WTC11 (cell line): ENCODE measurements at regions of chr15 and their contacts with region 1.

Region 1: GRCh38 chr15:68672781-68673205 is 94.0 kb downstream of the CORO2B start:
- DNase-seq: peak; percentile 49
- ATAC-seq: peak; percentile 71
- H3K4me3 Mint-ChIP-seq: no peak overlapping the region
- H3K27ac Mint-ChIP-seq: no peak overlapping the region
- H3K4me1 Mint-ChIP-seq: peaks cover 11% of the 10 kb centered on the region
- H3K27me3 Mint-ChIP-seq: no peaks in the 10 kb centered on the region
- CTCF ChIP-seq: no peak

Region 2: GRCh38 chr15:68537107-68537905 is 135.5 kb before region 1 on chr15:
- CTCF ChIA-PET with region 1: interaction called, 24 read pairs
- POLR2A ChIA-PET with region 1: no interaction called
- DNase-seq: no peak
- ATAC-seq: peak; percentile 73
- H3K4me3 Mint-ChIP-seq: no peak overlapping the region
- H3K27ac Mint-ChIP-seq: no peak overlapping the region
- H3K4me1 Mint-ChIP-seq: no peaks in the 10 kb centered on the region
- H3K27me3 Mint-ChIP-seq: peaks cover 6% of the 10 kb centered on the region
- CTCF ChIP-seq: no peak

Region 3: DNA sequence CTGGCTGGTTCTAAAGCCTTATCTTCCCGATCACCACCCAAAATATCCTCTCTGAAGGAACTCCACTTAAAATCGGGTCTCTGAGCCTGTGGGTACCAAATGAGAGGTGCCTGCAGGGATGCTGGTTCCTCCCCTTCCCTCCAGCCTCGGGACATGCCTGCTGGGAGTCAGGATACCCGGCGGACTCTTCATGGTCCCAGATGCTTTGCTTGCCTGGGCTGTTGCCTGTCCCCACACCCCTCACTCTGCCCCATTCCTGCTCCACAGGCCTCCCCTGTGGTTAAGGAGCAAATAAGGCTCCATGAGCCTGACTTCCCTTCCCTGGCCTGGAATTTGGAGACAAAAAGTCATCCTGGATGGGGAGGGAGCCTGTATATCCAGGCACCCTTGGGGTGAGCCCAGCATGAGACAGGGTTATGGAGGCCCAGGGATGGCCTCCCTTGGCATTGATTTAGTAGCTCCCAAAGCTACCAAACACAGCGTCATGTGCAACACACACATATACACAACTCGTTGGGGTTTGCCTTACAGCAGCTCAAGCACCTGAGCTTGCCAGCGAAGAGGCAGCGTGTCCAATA is 106.3 kb before region 1 on chr15:
- CTCF ChIA-PET with region 1: interaction called, 136 read pairs
- POLR2A ChIA-PET with region 1: interaction called, 3 read pairs
- DNase-seq: no peak
- ATAC-seq: peak; percentile 16; the same call in 1 of the 2 replicates
- H3K4me3 Mint-ChIP-seq: no peak overlapping the region
- H3K27ac Mint-ChIP-seq: no peak overlapping the region
- H3K4me1 Mint-ChIP-seq: peaks cover 40% of the 10 kb centered on the region
- H3K27me3 Mint-ChIP-seq: peaks cover 3% of the 10 kb centered on the region; the same call in 1 of the 2 replicates
- CTCF ChIP-seq: no peak

Region 4: DNA sequence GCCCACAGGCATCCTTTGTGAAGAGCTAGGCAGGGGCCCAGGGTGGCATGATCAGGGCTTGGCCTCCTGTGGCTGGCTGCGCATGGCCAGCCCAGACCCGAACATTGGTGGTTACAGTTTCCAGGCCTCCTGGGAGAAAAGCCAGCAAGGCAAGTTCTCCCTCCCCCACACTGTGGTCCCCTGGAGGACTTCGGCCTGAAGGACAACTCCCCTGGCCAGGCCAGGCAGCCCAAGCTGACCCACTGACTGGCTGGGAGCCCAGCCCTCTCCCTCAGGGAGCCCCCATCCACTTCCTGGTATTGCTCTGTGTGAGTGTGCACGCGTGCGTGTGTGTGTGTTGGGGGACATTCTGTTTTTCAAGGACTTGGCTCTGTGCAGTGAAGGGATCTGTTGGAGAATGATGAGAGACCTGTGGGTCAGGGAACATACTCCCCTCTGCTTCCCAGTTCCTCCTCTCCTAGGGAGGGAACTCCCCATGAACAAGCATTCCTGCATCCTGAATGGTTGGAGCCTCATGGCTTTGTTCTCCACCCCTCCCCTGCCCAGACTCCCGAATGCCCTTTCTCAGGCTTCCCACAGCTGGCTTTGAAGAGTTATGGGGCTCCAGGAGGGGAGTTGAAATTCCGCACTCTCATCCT is 64.5 kb before region 1 on chr15:
- CTCF ChIA-PET with region 1: interaction called, 22 read pairs
- POLR2A ChIA-PET with region 1: interaction called, 7 read pairs
- DNase-seq: no peak
- ATAC-seq: peak; percentile 80
- H3K4me3 Mint-ChIP-seq: no peak overlapping the region
- H3K27ac Mint-ChIP-seq: no peak overlapping the region
- H3K4me1 Mint-ChIP-seq: peaks cover 36% of the 10 kb centered on the region
- H3K27me3 Mint-ChIP-seq: peaks cover 2% of the 10 kb centered on the region; the same call in 1 of the 2 replicates
- CTCF ChIP-seq: no peak

Region 5: DNA sequence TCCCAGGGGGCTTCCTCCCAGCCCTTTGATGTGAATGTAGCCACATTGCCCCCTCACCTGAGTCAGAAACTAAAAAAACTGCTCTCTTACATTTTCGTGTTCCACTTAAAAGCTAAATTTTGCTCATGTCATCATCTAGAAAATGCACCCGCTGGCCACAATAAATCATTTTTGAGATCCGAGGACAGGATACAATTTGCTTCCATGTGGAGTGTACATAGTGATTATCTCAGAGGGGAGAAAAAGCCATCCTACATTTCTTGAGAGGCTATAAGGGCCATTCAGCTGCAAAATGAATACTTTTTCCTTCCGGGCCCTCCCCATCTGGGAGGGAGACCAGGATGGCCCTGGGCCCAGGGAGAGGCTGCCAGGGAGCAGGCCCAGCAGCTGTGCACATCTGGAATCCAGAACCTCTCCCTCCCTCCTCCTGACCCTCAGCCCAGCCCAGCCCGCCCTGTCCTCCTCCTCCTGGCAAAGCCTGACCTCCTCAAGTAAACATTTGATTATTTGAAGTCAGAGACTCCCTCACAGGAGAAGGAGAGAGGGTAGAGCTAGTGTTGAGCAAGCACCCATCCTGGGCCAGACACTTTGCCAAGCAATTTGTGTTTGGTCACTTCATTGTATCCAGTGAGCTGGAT is 34.9 kb before region 1 on chr15:
- CTCF ChIA-PET with region 1: interaction called, 127 read pairs
- POLR2A ChIA-PET with region 1: interaction called, 3 read pairs
- DNase-seq: no peak
- ATAC-seq: no peak
- H3K4me3 Mint-ChIP-seq: no peak overlapping the region
- H3K27ac Mint-ChIP-seq: no peak overlapping the region
- H3K4me1 Mint-ChIP-seq: peaks cover 40% of the 10 kb centered on the region
- H3K27me3 Mint-ChIP-seq: no peaks in the 10 kb centered on the region
- CTCF ChIP-seq: no peak

Region 6: DNA sequence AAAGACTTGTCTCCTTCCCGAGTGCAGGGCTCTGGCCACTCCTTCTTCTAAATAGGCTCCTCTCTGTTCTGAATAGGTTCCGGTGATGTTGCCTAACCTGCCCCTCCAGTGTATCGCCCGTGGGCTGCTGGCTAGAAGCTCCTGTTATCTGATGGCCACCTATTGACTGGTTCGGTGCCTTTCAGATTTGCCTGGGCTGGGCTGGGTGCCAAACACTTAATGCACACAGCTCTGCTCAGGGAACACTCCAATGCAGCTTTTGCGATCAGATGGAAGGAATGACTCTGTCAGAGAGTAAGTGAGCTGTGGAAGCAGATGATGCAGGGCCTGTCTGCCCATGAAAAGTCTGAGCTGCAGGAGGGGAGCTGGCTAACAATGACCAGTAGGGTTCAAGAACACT is 18.9 kb after region 1 on chr15:
- CTCF ChIA-PET with region 1: interaction called, 21 read pairs
- POLR2A ChIA-PET with region 1: no interaction called
- DNase-seq: no peak
- ATAC-seq: peak; percentile 69
- H3K4me3 Mint-ChIP-seq: no peak overlapping the region
- H3K27ac Mint-ChIP-seq: no peak overlapping the region
- H3K4me1 Mint-ChIP-seq: peaks cover 20% of the 10 kb centered on the region
- H3K27me3 Mint-ChIP-seq: peaks cover 5% of the 10 kb centered on the region
- CTCF ChIP-seq: no peak

Region 7: DNA sequence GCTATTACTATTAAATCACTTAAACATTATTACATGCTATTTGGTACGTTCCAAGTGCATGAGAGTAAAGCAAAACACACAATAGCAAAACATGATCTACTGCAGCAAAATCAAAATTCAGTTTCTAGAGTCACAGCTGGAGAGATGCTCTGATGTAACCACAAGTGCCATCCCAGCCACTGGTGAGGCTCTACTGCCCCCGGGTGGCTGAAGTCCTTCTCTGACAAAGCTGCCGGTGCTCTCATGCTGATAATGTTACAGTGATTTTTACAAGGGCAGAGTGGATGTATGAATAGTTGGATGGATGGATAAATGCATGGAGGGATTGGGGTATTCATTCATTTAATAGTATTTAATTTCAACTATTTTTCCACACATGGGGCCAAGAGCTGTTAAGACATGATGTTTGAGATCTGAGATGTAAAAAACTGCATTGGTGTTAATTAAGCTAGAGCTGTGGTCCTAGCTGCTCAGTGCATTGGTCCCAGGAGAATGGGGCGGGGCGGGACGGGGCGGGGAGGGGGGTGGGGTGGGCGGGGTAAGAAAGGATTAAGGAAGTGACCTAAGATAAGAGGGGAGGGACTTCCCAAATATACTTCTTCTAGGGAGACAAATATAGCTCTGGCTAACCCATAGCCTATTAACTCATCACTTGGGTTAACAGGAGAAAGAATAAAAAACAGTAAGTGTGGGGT is 252.2 kb after region 1 on chr15:
- CTCF ChIA-PET with region 1: interaction called, 70 read pairs
- POLR2A ChIA-PET with region 1: no interaction called
- DNase-seq: peak; percentile 88
- ATAC-seq: peak; percentile 96
- H3K4me3 Mint-ChIP-seq: no peak overlapping the region
- H3K27ac Mint-ChIP-seq: peak overlapping the region; percentile 1
- H3K4me1 Mint-ChIP-seq: peaks cover 5% of the 10 kb centered on the region; the same call in 1 of the 2 replicates
- H3K27me3 Mint-ChIP-seq: peaks cover 8% of the 10 kb centered on the region
- CTCF ChIP-seq: peak; percentile 72